ENCODE measurements at regions of chr7 and their contacts with region 1.

Region 1: DNA sequence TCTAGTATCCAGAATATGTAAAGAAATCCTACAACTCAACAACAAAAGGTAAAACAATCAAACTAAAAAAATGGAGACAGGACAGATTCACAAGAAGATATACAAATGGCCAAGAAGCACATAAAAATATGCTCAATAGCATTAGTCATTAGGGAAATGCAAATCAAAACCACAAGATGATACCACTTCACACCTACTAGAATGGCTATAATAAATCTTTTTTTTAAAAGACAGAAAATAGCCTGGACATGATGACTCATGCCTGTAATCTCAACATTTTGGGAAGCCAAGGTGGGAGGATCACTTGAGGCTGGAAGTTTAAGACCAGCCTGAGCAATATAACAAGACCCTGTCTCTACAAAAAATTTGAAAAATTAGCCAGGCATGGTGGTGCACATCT is 27.9 kb upstream of the CHCHD3 start:
- DNase-seq: no peak
- ATAC-seq: no peak
- H3K4me3 ChIP-seq: no peak overlapping the region
- H3K27ac ChIP-seq: no peak overlapping the region
- H3K4me1 ChIP-seq: no peaks in the 10 kb centered on the region
- H3K27me3 ChIP-seq: peaks cover 0 to 32% (median 12%) of the 10 kb centered on the region in 7 donors
- CTCF ChIP-seq: no peak

Region 2: GRCh38 chr7:133140994-133141595 is 31.3 kb after region 1 on chr7:
- intact Hi-C with region 1: loop called in 1 of 10 experiments (anchors 2 kb)
- DNase-seq: no peak
- ATAC-seq: no peak
- H3K4me3 ChIP-seq: no peak overlapping the region
- H3K27ac ChIP-seq: no peak overlapping the region
- H3K4me1 ChIP-seq: no peaks in the 10 kb centered on the region
- H3K27me3 ChIP-seq: peaks cover 0 to 37% (median 6%) of the 10 kb centered on the region in 7 donors
- CTCF ChIP-seq: no peak

Region 3: GRCh38 chr7:133155146-133155545 is 45.3 kb after region 1 on chr7:
- intact Hi-C with region 1: no loop called
- DNase-seq: no peak
- ATAC-seq: no peak
- H3K4me3 ChIP-seq: no peak overlapping the region
- H3K27ac ChIP-seq: no peak overlapping the region
- H3K4me1 ChIP-seq: no peaks in the 10 kb centered on the region
- H3K27me3 ChIP-seq: peaks cover 0 to 4% (median 0%) of the 10 kb centered on the region in 7 donors
- CTCF ChIP-seq: no peak